Prostate gland (tissue), 2 donors: ENCODE measurements at regions of chr1 and their contacts with region 1.

Region 1: GRCh38 chr1:201170533-201171062 is 16.3 kb upstream of the TMEM9 start:
- DNase-seq: peak; percentile 95
- H3K4me3 ChIP-seq: peak overlapping the region; percentile 51 to 52
- H3K27ac ChIP-seq: peak overlapping the region; percentile 75 to 88
- H3K4me1 ChIP-seq: no peaks in the 10 kb centered on the region
- H3K27me3 ChIP-seq: no peaks in the 10 kb centered on the region
- CTCF ChIP-seq: peak in 1 of 4 experiments; percentile 49
- POLR2A ChIP-seq: peak; percentile 78

Region 2: GRCh38 chr1:201154389-201155165 is 16.0 kb before region 1 on chr1 and contains the start of gene TMEM9:
- intact Hi-C with region 1: loop called (anchors 2 kb)
- DNase-seq: peak; percentile 98
- H3K4me3 ChIP-seq: peak within 1 kb of the TSS; percentile 59 to 89
- H3K27ac ChIP-seq: peak within 1 kb of the TSS; percentile 25 to 73
- H3K4me1 ChIP-seq: no peaks in the 10 kb centered on the region
- H3K27me3 ChIP-seq: no peaks in the 10 kb centered on the region
- CTCF ChIP-seq: peak in 1 of 4 experiments; percentile 22
- POLR2A ChIP-seq: peak; percentile 57
- total RNA-seq, gene TMEM9: 131 to 164 TPM